Prostate gland (tissue), 2 donors: ENCODE measurements at regions of chr12 and their contacts with region 1.

Region 1: GRCh38 chr12:45309836-45310626 is 94.1 kb downstream of the ANO6 start:
- DNase-seq: no peak
- H3K4me3 ChIP-seq: no peak overlapping the region
- H3K27ac ChIP-seq: no peak overlapping the region
- H3K4me1 ChIP-seq: no peaks in the 10 kb centered on the region
- H3K27me3 ChIP-seq: no peaks in the 10 kb centered on the region
- CTCF ChIP-seq: no peak
- POLR2A ChIP-seq: no peak

Region 2: GRCh38 chr12:45268672-45269411 is 41.2 kb before region 1 on chr12:
- intact Hi-C with region 1: no loop called
- DNase-seq: peak; percentile 52
- H3K4me3 ChIP-seq: no peak overlapping the region
- H3K27ac ChIP-seq: peak overlapping the region; percentile 7 to 22
- H3K4me1 ChIP-seq: no peaks in the 10 kb centered on the region
- H3K27me3 ChIP-seq: no peaks in the 10 kb centered on the region
- CTCF ChIP-seq: peak; percentile 13 to 44 (median 31)
- POLR2A ChIP-seq: no peak

Region 3: GRCh38 chr12:45357539-45358417 is 47.7 kb after region 1 on chr12:
- intact Hi-C with region 1: loop called (anchors 5 kb)
- DNase-seq: no peak
- H3K4me3 ChIP-seq: no peak overlapping the region
- H3K27ac ChIP-seq: peak overlapping the region in 1 of 2 donors; percentile 46
- H3K4me1 ChIP-seq: no peaks in the 10 kb centered on the region
- H3K27me3 ChIP-seq: no peaks in the 10 kb centered on the region
- CTCF ChIP-seq: no peak
- POLR2A ChIP-seq: no peak